HAP-1 (cell line): ENCODE measurements at regions of chr20 and their contacts with region 1.

Region 1: GRCh38 chr20:25623736-25624499 is at the start of gene NANP:
- DNase-seq: peak; percentile 92 to 98
- H3K4me3 ChIP-seq: peak within 1 kb of the TSS; percentile 57
- H3K4me1 ChIP-seq: peaks cover 20% of the 10 kb centered on the region
- H3K27me3 ChIP-seq: no peaks in the 10 kb centered on the region

Region 2: DNA sequence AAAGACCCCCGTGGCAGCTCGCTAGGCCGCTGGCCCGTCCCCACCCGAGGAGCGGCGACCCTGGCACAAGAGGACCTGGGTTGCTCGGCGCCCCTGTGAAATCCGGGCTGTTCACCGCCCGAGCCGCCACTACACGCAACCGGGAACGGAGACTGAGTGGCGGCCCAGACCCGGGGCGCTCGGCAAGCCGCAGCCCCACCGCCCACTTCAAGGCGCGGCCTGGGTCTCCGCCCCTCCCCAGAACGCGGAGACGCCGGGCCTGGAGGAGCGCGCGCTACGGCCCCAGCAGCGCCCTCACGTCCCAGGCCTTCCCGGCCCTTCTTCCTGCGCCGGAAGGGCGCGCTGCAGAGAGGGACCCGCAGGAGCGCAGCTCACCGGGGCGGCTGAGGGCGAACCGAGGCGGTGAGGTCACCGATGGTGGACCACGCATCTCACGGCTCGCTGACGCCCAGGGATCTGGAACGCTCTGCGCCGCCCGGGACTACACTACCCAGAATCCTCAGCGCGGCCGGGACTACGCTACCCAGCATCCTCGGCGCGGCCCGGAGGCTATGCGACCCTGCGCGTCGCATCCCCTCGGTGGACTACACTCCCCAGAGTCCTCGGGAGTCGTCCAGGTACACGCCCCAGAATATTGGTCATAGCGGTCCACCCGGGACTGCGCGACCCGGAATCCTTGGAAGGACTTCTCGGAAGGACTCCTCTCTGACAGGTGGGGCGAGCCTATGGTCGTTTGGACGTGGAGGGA is 72.6 kb after region 1 on chr20 and contains the start of gene ZNF337:
- in situ Hi-C with region 1: loop called (anchors 5 kb)
- DNase-seq: peak; percentile 90 to 96
- H3K4me3 ChIP-seq: peak within 1 kb of the TSS; percentile 69
- H3K4me1 ChIP-seq: no peaks in the 10 kb centered on the region; the same call in 1 of the 2 replicates
- H3K27me3 ChIP-seq: no peaks in the 10 kb centered on the region